ENCODE measurements at regions of chr11 and their contacts with region 1.

Region 1: GRCh38 chr11:122453586-122453985 is 201.9 kb upstream of the UBASH3B start:
- DNase-seq: no peak
- H3K4me3 ChIP-seq: no peak overlapping the region
- H3K4me3 Mint-ChIP-seq: no peak overlapping the region
- H3K27ac Mint-ChIP-seq: no peak overlapping the region
- H3K4me1 ChIP-seq: no peaks in the 10 kb centered on the region
- H3K4me1 Mint-ChIP-seq: no peaks in the 10 kb centered on the region
- H3K27me3 ChIP-seq: no peaks in the 10 kb centered on the region
- H3K27me3 Mint-ChIP-seq: peaks cover 12% of the 10 kb centered on the region
- CTCF ChIP-seq: no peak

Region 2: GRCh38 chr11:122215244-122215992 is 238.2 kb before region 1 on chr11:
- CTCF ChIA-PET with region 1: no interaction called
- POLR2A ChIA-PET with region 1: no interaction called
- intact Hi-C with region 1: loop called (anchors 1 kb)
- DNase-seq: peak; percentile 68 to 82
- H3K4me3 ChIP-seq: no peak overlapping the region
- H3K4me3 Mint-ChIP-seq: no peak overlapping the region
- H3K27ac Mint-ChIP-seq: no peak overlapping the region
- H3K4me1 ChIP-seq: no peaks in the 10 kb centered on the region
- H3K4me1 Mint-ChIP-seq: no peaks in the 10 kb centered on the region
- H3K27me3 ChIP-seq: no peaks in the 10 kb centered on the region
- H3K27me3 Mint-ChIP-seq: peaks cover 12% of the 10 kb centered on the region
- CTCF ChIP-seq: peak; percentile 98 to 99